Activated CD4-positive, alpha-beta T cell treated with anti-CD3 and anti-CD28 coated beads for 36 hours (primary cell): ENCODE measurements at regions of chr3 and their contacts with region 1.

Region 1: GRCh38 chr3:24680214-24680967 is 185.7 kb upstream of the THRB start:
- DNase-seq: peak; percentile 79
- ATAC-seq: peak; percentile 69
- H3K4me3 Mint-ChIP-seq: no peak overlapping the region
- H3K27ac Mint-ChIP-seq: no peak overlapping the region
- H3K4me1 Mint-ChIP-seq: peaks cover 10% of the 10 kb centered on the region
- H3K27me3 Mint-ChIP-seq: peaks cover 60% of the 10 kb centered on the region

Region 2: GRCh38 chr3:24137958-24138875 is 542.2 kb before region 1 on chr3:
- CTCF ChIA-PET with region 1: no interaction called
- POLR2A ChIA-PET with region 1: no interaction called
- intact Hi-C with region 1: no loop called
- DNase-seq: no peak
- ATAC-seq: no peak
- H3K4me3 Mint-ChIP-seq: no peak overlapping the region
- H3K27ac Mint-ChIP-seq: no peak overlapping the region
- H3K4me1 Mint-ChIP-seq: no peaks in the 10 kb centered on the region
- H3K27me3 Mint-ChIP-seq: no peaks in the 10 kb centered on the region

Region 3: GRCh38 chr3:24185738-24186384 is 494.5 kb before region 1 on chr3:
- CTCF ChIA-PET with region 1: no interaction called
- POLR2A ChIA-PET with region 1: no interaction called
- intact Hi-C with region 1: loop called in 1 of 2 experiments (anchors 1 kb)
- DNase-seq: peak; percentile 55
- ATAC-seq: peak; percentile 77
- H3K4me3 Mint-ChIP-seq: no peak overlapping the region
- H3K27ac Mint-ChIP-seq: no peak overlapping the region
- H3K4me1 Mint-ChIP-seq: no peaks in the 10 kb centered on the region
- H3K27me3 Mint-ChIP-seq: no peaks in the 10 kb centered on the region

Region 4: GRCh38 chr3:24264748-24265158 is 415.6 kb before region 1 on chr3:
- CTCF ChIA-PET with region 1: interaction called, 3 read pairs
- POLR2A ChIA-PET with region 1: no interaction called
- intact Hi-C with region 1: loop called in 1 of 2 experiments (anchors 5 kb)
- DNase-seq: peak; percentile 18
- ATAC-seq: no peak
- H3K4me3 Mint-ChIP-seq: no peak overlapping the region
- H3K27ac Mint-ChIP-seq: no peak overlapping the region
- H3K4me1 Mint-ChIP-seq: no peaks in the 10 kb centered on the region
- H3K27me3 Mint-ChIP-seq: peaks cover 12% of the 10 kb centered on the region

Region 5: DNA sequence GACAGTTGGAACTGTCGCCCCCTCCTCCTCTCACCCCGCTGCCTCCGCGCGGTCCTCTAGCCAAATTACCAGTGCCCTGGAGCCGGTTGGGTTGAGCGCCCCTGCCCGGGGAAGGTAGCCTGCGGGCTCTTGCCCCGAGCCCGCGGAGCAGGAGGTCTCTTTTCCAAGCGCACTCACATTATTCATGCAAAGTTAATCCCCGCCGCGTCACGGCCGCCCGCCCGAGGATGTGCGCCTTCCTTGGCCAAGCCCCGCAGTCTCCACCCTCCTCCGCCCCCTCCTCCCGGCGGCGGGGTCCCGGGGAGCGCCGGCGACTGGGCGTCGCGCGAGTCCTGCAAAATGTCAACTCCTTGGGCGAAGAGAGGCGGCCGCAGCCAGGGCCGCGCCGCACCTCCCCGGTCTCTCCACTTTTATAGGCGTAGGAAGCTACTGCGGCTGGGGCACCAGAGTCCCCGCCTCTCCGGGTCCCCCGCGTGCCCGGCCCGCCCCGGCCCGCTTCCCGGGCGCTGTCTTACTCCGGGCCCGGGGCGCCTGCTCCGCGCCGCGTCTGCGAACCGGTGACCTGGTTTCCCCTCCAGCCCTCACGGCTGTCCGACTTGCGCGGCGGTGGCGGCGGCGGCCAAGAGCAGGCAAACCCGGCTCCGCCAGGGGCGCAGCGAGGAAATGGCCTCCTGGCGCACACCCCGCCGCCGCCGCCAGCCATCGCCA is 185.6 kb before region 1 on chr3 and contains the start of gene THRB:
- CTCF ChIA-PET with region 1: no interaction called
- POLR2A ChIA-PET with region 1: no interaction called
- intact Hi-C with region 1: loop called (anchors 5 kb)
- DNase-seq: peak; percentile 34
- ATAC-seq: peak; percentile 23
- H3K4me3 Mint-ChIP-seq: peak within 1 kb of the TSS; percentile 30
- H3K27ac Mint-ChIP-seq: no peak within 1 kb of the TSS
- H3K4me1 Mint-ChIP-seq: peaks cover 2% of the 10 kb centered on the region
- H3K27me3 Mint-ChIP-seq: peaks cover 51% of the 10 kb centered on the region
- total RNA-seq, gene THRB: not detected

Region 6: GRCh38 chr3:24608701-24609390 is 71.5 kb before region 1 on chr3:
- CTCF ChIA-PET with region 1: no interaction called
- POLR2A ChIA-PET with region 1: no interaction called
- intact Hi-C with region 1: no loop called
- DNase-seq: no peak
- ATAC-seq: no peak
- H3K4me3 Mint-ChIP-seq: no peak overlapping the region
- H3K27ac Mint-ChIP-seq: no peak overlapping the region
- H3K4me1 Mint-ChIP-seq: no peaks in the 10 kb centered on the region
- H3K27me3 Mint-ChIP-seq: no peaks in the 10 kb centered on the region